ENCODE measurements at regions of chr2 and their contacts with region 1.

Region 1: DNA sequence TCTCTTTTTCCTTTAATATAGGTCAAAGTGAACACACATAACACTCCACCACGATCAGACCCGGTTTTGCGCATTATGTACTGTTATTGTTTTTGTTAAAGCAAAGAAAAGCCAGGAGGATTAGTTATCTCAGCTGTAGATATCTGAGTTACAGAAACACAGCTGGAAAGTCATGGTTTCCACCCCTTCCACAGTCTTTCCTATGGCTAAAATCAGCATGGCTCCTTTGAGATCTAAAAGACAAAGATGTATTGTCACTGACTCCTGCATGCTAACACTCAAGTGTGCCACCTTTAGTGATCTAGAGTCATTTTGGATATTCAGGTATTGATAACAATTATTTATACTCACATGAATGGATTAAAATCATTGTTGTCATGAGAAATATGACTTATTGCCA is 260.0 kb downstream of the FIGN start:
- DNase-seq: no peak
- H3K4me3 ChIP-seq: no peak overlapping the region
- CTCF ChIP-seq: no peak

Region 2: DNA sequence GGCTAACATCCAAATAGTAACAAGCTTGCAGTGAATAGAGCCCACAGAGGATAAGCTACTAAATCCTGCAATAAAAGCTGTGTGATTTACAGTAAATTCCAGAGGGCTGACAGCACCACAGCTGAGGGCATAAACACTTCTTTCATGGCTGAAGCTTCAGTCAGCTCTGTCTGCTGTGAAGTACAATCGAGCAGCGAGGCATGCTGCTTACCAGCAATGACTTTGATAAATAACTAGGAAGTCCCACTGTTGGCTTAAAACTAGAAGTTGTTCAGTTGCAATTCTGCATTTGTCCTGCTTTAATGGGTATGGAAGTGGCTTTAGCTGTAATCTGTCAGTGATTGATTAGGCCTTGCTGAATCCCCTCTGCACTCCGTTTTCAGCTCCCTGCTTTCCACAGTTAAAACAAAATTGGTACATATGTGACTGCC is 325.2 kb after region 1 on chr2:
- in situ Hi-C with region 1: loop called (anchors 5 kb)
- DNase-seq: peak; percentile 33
- H3K4me3 ChIP-seq: no peak overlapping the region
- CTCF ChIP-seq: no peak